Psoas muscle (tissue), 8 donors: ENCODE measurements at regions of chr12 and their contacts with region 1.

Region 1: GRCh38 chr12:74770552-74770951 is 232.9 kb downstream of the ATXN7L3B start:
- DNase-seq: no peak
- ATAC-seq: no peak
- H3K4me3 ChIP-seq: no peak overlapping the region
- H3K27ac ChIP-seq: no peak overlapping the region
- H3K4me1 ChIP-seq: no peaks in the 10 kb centered on the region
- H3K27me3 ChIP-seq: no peaks in the 10 kb centered on the region
- CTCF ChIP-seq: no peak

Region 2: GRCh38 chr12:74791365-74791764 is 20.8 kb after region 1 on chr12:
- intact Hi-C with region 1: loop called in 1 of 2 experiments (anchors 1 kb)
- DNase-seq: no peak
- ATAC-seq: peak; percentile 37 to 64 (median 52)
- H3K4me3 ChIP-seq: no peak overlapping the region
- H3K27ac ChIP-seq: no peak overlapping the region
- H3K4me1 ChIP-seq: no peaks in the 10 kb centered on the region
- H3K27me3 ChIP-seq: no peaks in the 10 kb centered on the region
- CTCF ChIP-seq: no peak